Heart right ventricle (tissue), 16 donors: ENCODE measurements at regions of chr3 and their contacts with region 1.

Region 1: DNA sequence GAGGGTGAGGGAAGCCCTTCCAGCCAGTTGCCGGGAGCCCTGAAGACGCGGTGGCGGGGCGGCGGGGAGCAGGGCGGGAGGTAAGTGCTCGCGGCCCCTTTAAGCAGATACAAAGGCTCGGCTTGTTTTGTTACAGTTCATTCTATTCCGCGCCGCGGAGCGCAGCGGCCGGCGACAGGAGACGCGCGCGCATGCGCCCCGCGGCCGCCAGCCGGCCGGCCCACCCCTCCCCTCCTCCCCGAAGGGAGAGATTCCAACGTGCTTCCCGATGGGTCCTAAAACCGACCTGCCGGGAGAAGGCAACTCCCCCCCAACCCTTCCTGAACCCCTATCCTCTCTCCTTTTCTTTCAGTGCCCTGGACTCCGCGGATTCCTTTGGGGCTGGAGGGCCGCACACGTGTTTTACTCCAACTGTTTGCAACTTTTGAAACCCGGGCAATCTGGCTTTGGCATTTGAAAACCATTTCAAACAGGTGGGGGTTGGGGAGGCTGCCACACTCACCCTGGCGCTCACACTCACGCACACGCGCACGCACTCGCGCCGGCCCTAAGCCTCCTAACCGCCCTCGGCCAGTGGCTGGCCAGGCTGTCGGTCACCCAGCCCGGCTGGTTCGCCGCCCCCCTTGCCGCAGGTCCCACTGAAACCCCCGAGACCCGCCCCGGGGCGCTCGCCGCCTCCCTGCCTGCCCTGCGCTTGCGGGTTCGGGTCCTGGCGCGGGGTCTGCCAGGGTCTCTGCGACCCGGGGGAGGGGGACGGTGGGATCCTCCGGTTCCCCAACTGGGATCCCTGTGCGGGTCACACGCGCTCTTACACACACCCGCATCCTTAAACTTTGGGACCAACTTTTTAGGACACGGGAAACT is at the start of gene MAGI1:
- DNase-seq: peak; percentile 89 to 94
- ATAC-seq: peak; percentile 87 to 93 (median 90)
- H3K4me3 ChIP-seq: peak within 1 kb of the TSS; percentile 58 to 96 (median 80)
- H3K27ac ChIP-seq: peak within 1 kb of the TSS; percentile 76 to 98 (median 94)
- H3K4me1 ChIP-seq: peaks cover 2 to 40% (median 22%) of the 10 kb centered on the region in 9 donors
- H3K27me3 ChIP-seq: peaks cover 0 to 51% (median 0%) of the 10 kb centered on the region in 7 donors
- CTCF ChIP-seq: no peak
- total RNA-seq, gene MAGI1: 19.4 to 58.2 (median 43.6) TPM

Region 2: DNA sequence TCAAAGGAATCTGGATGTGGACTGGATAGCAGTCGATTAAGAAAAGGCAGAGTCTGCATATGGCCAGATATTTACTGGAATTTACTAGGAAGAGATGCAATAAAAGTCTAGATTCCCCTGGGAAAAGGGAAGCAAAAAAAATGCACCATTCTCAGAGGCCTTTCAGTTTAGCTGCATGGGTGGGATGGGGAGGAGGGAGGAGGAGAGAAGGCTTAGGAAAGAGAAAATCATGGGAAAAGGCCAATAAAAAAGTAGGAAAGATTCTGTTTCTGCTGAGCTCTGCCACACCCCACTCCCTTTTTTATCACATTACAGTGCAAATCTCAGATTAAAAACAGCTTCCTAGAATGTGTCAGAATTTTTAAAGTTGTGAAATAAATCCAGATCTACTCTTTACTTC is 1454.8 kb before region 1 on chr3:
- intact Hi-C with region 1: no loop called
- DNase-seq: peak in 1 of 2 donors; percentile 20
- ATAC-seq: peak in 7 of 8 donors; percentile 41 to 75 (median 44)
- H3K4me3 ChIP-seq: no peak overlapping the region
- H3K27ac ChIP-seq: peak overlapping the region in 3 of 10 donors; percentile 13 to 45 (median 27)
- H3K4me1 ChIP-seq: peaks cover 0 to 24% (median 0%) of the 10 kb centered on the region in 9 donors
- H3K27me3 ChIP-seq: no peaks in the 10 kb centered on the region
- CTCF ChIP-seq: no peak

Region 3: DNA sequence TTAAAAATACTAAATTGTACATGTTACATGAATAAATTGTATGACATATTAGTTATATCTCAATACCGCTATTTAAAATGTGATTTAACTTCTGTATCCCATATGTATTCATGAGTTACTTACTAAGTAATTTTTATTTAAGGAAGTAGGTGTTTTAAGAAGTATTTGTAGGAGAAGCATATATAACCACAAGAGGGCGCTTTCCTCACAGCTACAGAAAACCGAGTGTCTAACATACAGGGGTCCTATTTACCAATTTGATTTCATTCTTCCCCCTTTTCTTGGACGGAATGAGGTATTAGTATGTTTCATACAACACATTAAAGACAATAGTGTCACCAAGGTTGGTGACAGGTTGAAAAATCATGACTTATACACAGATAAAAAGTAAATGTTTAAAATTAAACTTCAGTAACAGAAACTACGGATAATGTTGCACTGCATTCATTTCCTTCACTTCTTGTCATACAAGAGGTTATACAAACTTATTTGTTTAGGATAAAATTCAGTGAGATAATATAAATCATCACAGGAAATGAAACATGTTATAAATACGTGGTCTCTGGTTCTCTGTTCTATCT is 253.8 kb before region 1 on chr3:
- intact Hi-C with region 1: loop called in 8 of 10 experiments (anchors 2 to 10 kb)
- DNase-seq: peak in 1 of 2 donors; percentile 13
- ATAC-seq: peak in 3 of 8 donors; percentile 20 to 55 (median 34)
- H3K4me3 ChIP-seq: no peak overlapping the region
- H3K27ac ChIP-seq: no peak overlapping the region
- H3K4me1 ChIP-seq: peaks cover 3 to 42% (median 17%) of the 10 kb centered on the region in 9 donors
- H3K27me3 ChIP-seq: no peaks in the 10 kb centered on the region
- CTCF ChIP-seq: peak; percentile 65 to 89 (median 80)

Region 4: GRCh38 chr3:65888980-65889706 is 149.8 kb before region 1 on chr3:
- intact Hi-C with region 1: loop called in 1 of 10 experiments (anchors 10 kb)
- DNase-seq: peak in 1 of 2 donors; percentile 14
- ATAC-seq: peak; percentile 55 to 96 (median 92)
- H3K4me3 ChIP-seq: no peak overlapping the region
- H3K27ac ChIP-seq: peak overlapping the region in 7 of 10 donors; percentile 6 to 75 (median 65)
- H3K4me1 ChIP-seq: peaks cover 0 to 47% (median 18%) of the 10 kb centered on the region in 9 donors
- H3K27me3 ChIP-seq: no peaks in the 10 kb centered on the region
- CTCF ChIP-seq: no peak

Region 5: DNA sequence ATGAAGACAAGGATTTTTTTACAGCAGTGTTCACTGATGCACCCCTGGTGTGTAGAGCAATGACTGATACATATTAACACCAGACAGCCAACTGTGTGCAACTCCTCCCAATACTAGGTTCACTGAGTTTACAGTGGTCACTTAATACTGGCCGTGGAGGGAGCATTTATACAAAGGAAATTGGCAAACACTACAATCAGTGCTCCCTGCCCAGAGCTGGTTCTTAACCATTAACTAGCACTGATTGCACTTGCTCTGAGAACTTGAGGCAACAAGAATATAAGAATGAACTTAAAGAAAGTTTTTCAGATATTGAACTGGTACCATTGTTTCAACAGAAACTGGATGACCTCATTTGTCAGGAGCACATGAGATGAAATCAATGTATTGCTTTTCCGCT is 110.8 kb before region 1 on chr3:
- intact Hi-C with region 1: no loop called
- DNase-seq: no peak
- ATAC-seq: no peak
- H3K4me3 ChIP-seq: no peak overlapping the region
- H3K27ac ChIP-seq: no peak overlapping the region
- H3K4me1 ChIP-seq: peaks cover 0 to 31% (median 12%) of the 10 kb centered on the region in 9 donors
- H3K27me3 ChIP-seq: no peaks in the 10 kb centered on the region
- CTCF ChIP-seq: no peak

Region 6: DNA sequence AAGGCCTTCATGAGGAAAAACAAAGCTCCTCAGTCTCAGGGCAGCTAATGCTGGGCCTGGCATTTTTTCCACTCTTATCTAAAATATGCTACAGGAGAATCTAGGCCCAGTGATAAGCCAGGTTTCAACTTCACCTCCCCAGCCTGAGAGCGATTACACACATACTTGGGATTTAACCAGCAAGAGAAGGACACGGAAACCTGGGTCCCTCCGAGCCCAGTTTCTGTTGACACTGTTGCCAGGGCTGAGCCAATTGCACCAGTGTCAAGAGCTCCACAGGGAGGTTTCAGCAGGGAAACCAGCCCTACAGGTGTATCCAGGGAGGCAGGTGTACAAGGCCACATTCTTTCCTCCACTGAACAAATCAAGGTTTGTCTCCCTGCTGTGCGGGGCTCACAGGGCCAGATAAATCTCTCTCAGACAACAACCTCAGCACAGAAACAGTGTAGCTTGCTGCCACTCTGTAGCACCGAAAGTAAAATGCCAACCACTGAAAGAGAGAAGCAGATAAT is 85.6 kb before region 1 on chr3:
- intact Hi-C with region 1: loop called in 3 of 10 experiments (anchors 5 kb)
- DNase-seq: no peak
- ATAC-seq: peak in 6 of 8 donors; percentile 14 to 77 (median 55)
- H3K4me3 ChIP-seq: peak overlapping the region in 2 of 10 donors; percentile 16 to 41
- H3K27ac ChIP-seq: peak overlapping the region; percentile 40 to 86 (median 68)
- H3K4me1 ChIP-seq: peaks cover 13 to 71% (median 55%) of the 10 kb centered on the region in 9 donors
- H3K27me3 ChIP-seq: no peaks in the 10 kb centered on the region
- CTCF ChIP-seq: no peak

Region 7: DNA sequence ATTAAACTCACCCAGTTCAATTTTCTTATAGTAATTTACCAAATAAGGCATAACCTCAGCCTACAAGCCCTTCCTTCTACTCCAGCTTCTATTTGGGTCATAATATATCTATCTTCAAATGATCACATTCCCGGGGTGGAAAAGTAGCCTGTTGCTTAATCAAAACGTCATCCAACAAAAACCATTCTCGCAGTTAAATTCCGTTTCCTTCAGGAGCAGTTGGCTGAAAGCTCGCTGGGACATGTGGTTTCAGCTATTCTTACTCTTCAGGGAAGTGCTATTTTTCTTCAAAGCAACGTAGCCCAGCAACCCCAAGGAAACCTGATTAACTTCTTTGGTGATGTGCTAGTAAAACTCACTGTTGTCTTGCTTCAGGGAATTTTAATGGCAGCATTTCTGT is 59.8 kb before region 1 on chr3:
- intact Hi-C with region 1: loop called in 1 of 10 experiments (anchors 10 kb)
- DNase-seq: peak in 1 of 2 donors; percentile 41
- ATAC-seq: peak in 7 of 8 donors; percentile 51 to 73 (median 62)
- H3K4me3 ChIP-seq: no peak overlapping the region
- H3K27ac ChIP-seq: peak overlapping the region in 4 of 10 donors; percentile 5 to 59 (median 39)
- H3K4me1 ChIP-seq: peaks cover 0 to 34% (median 14%) of the 10 kb centered on the region in 9 donors
- H3K27me3 ChIP-seq: no peaks in the 10 kb centered on the region
- CTCF ChIP-seq: no peak

Region 8: DNA sequence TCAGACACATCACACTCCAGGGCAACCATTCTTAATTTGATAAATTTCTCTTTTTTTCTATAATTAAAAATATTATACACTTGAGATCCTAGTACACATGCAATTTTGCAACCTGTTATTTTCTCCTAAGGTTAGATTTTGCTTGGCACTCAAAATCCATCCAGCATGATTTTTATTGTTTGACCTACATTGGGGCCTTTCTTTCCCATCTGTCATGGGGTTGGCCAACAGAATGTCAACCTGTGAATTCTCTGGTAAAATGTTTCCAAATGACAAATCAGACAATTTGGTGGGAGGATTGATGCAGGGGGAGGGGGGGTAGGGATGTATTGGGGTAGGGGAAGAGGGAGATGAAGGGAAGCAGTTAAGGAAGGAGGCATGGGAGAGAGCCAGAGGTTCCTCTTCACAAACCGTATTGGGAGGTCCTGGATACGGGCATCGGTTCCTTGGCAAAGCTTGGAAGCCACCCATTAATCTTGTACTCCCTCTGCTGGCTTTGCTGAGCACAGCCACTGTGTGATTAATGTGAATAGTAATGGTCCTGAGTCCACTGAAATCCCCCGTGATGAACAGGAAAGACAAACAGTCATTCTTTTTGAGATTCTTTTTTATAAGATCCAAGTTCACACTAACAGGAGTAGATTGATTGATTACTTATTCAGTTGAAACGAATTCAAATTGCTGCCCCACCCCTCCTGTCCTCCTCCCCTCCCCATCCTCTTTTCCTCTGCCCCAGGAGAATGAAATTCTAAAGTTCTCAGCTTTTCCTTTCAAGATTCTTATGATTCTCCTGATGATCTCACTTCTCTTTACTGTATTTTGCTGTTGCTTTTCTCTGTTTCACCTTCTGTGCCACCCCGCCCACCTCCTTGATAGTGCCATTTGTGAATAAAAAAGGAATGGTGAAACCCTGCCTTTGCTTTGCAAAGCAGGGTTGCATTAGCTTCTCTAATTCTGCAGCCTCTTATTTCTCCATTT is 99.7 kb after region 1 on chr3:
- intact Hi-C with region 1: loop called in 6 of 10 experiments (anchors 1 to 5 kb)
- DNase-seq: peak in 1 of 2 donors; percentile 65
- ATAC-seq: peak; percentile 79 to 94 (median 88)
- H3K4me3 ChIP-seq: no peak overlapping the region
- H3K27ac ChIP-seq: peak overlapping the region in 3 of 10 donors; percentile 46 to 52 (median 51)
- H3K4me1 ChIP-seq: peaks cover 0 to 10% (median 9%) of the 10 kb centered on the region in 9 donors
- H3K27me3 ChIP-seq: no peaks in the 10 kb centered on the region
- CTCF ChIP-seq: peak; percentile 68 to 88 (median 82)

Region 9: DNA sequence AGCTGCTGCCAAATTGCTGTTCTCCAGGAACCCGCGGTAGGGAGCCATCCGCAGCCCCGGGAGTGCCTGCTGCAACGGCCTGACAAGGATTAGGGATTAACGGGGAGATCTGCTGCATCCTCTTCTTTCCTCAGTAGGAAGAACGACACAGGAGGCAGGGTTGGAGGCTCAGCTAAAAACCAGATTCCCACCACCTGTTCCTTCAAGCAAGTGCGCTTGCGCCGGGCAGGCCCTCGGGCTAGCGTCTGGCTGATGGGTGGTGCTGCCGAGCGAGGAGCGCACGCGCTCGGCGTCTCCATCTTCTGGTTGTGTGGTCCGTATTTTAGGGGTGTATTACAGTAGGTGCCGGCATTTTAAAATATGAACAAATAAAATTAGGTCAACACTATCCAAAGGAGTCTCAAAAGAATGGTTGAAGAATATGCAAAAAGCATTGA is 156.4 kb after region 1 on chr3:
- intact Hi-C with region 1: loop called in 1 of 10 experiments (anchors 10 kb)
- DNase-seq: peak; percentile 50 to 57
- ATAC-seq: peak; percentile 70 to 87 (median 80)
- H3K4me3 ChIP-seq: peak overlapping the region; percentile 4 to 52 (median 30)
- H3K27ac ChIP-seq: peak overlapping the region in 7 of 10 donors; percentile 65 to 85 (median 74)
- H3K4me1 ChIP-seq: peaks cover 0 to 12% (median 0%) of the 10 kb centered on the region in 9 donors
- H3K27me3 ChIP-seq: peaks cover 0 to 18% (median 0%) of the 10 kb centered on the region in 7 donors
- CTCF ChIP-seq: peak in 6 of 9 donors; percentile 19 to 45 (median 32)